SK-N-SH (cell line): ENCODE measurements at regions of chr14 and their contacts with region 1.

Region 1: DNA sequence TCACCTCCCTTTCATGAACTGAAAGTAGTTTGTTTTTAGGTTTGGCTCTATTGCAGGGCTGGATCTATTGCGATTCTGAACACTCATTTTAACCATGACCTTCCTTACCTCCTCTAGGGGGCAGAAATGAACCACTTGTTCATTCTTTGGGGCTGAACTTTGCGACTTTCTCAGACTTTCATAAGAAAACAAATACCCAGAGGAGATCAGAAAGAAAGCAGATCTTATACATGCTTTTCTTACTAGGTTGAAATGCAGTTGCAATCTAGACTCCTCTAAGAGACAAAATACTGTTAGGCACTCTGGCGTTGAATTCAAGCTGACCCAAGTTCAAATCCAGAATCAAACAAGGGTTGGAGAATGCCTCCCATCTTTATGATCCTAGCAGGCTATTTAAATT is 32.6 kb upstream of the PLEKHG3 start:
- DNase-seq: peak; percentile 69
- H3K4me3 ChIP-seq: no peak overlapping the region; a peak in 1 of 4 replicates
- H3K27ac ChIP-seq: no peak overlapping the region
- H3K4me1 ChIP-seq: no peaks in the 10 kb centered on the region; a peak in 1 of 4 replicates
- H3K27me3 ChIP-seq: no peaks in the 10 kb centered on the region
- CTCF ChIP-seq: peak; percentile 81
- EP300 ChIP-seq: no peak
- RAD21 ChIP-seq: peak; percentile 91

Region 2: GRCh38 chr14:64681796-64682710 is 10.5 kb after region 1 on chr14:
- CTCF ChIA-PET with region 1: interaction called, 10 read pairs
- POLR2A ChIA-PET with region 1: no interaction called
- DNase-seq: no peak
- H3K4me3 ChIP-seq: no peak overlapping the region
- H3K27ac ChIP-seq: peak overlapping the region in 1 of 2 experiments; percentile 18; a peak in 1 of 4 replicates
- H3K4me1 ChIP-seq: peaks cover 0 to 5% of the 10 kb centered on the region in 2 experiments; a peak in 1 of 4 replicates
- H3K27me3 ChIP-seq: no peaks in the 10 kb centered on the region
- CTCF ChIP-seq: no peak
- EP300 ChIP-seq: no peak
- RAD21 ChIP-seq: no peak